Activated CD8-positive, alpha-beta T cell treated with anti-CD3 and anti-CD28 coated beads for 36 hours (primary cell): ENCODE measurements at regions of chr1 and their contacts with region 1.

Region 1: DNA sequence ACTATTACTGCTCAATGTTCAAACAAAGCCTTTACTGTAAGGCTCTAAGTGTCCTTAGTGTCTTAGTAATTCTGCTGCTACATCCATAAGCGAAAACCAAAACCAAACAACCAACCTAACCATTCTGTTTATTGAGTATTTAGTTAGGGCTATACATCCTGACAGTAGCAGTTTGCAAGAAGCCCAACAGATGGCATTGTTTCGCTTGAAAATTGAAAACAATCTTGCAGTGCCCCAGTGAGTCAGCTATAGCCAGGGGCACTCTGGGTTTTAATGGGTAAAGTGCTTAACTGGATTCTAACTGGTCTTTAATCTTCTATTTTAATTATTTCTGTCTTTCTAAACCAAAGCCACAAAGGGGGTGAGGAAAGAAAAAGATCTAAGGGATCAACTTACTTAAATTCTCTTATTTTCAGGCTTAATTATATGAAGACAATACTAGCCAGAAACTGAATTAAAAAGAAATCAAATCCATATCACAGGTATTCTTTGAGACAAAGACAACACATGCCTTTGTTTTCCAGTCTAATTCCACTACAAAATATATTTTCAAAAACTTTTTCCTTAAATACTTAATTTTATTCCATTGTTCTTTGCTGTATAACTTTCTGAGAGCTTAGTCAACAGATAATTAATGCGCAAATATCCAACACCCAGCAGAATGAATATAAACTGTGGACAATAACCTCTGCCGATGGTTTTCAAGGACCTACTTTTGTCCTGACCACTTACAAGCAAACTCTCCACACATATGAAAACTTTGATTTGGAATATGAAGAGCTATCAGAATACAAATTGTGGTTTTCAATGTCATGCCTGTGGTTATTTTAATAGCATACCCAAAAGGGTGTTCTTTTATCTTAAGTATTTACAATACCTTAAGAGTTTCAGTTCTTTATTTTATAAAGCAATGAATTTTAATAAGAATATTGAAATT is 15.2 kb downstream of the POGZ start:
- DNase-seq: peak; percentile 86
- ATAC-seq: peak; percentile 96
- H3K4me3 Mint-ChIP-seq: no peak overlapping the region
- H3K27ac Mint-ChIP-seq: no peak overlapping the region
- H3K4me1 Mint-ChIP-seq: peaks cover 48% of the 10 kb centered on the region
- H3K27me3 Mint-ChIP-seq: no peaks in the 10 kb centered on the region
- CTCF ChIP-seq: peak; percentile 80

Region 2: DNA sequence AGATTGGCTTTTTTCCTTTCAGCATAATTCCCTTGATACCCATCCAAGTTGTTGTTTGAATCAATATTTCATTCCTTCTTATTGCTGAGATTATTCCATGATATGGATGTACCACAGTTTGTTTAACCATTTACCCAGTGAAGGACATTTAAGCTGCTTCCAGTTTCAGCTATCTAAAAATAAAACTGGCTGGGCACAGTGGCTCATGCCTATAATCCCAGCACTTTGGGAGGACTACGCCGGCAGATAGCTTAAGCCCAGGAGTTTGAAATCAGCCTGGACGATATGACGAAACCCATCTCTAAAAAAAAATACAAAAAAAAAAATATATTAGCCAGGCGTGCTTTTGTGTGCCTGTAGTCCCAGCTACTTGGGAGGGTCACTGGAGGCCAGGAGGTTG is 330.2 kb before region 1 on chr1:
- CTCF ChIA-PET with region 1: no interaction called
- POLR2A ChIA-PET with region 1: no interaction called
- intact Hi-C with region 1: no loop called
- DNase-seq: no peak
- ATAC-seq: no peak
- H3K4me3 Mint-ChIP-seq: no peak overlapping the region
- H3K27ac Mint-ChIP-seq: no peak overlapping the region
- H3K4me1 Mint-ChIP-seq: no peaks in the 10 kb centered on the region
- H3K27me3 Mint-ChIP-seq: no peaks in the 10 kb centered on the region
- CTCF ChIP-seq: no peak

Region 3: DNA sequence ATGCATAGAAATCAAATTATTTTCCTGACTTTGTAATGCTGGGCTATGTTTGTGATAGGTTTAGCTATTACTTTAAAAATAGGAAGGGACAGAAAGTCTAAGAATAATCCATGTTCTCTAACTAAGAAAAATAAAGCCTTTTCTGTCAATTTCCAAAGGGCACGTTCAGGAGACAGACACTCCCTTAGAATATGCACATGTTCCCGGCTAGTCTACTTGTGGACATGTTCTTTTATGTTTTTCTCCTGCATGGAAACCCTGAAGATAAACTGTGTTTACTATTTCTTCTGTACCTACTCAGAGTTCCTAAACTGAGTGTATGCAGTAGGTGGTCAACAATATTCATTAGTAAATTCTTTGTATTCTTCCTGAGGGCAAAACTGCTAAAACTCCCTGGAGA is 32.2 kb before region 1 on chr1:
- CTCF ChIA-PET with region 1: no interaction called
- POLR2A ChIA-PET with region 1: no interaction called
- intact Hi-C with region 1: no loop called
- DNase-seq: no peak
- ATAC-seq: no peak
- H3K4me3 Mint-ChIP-seq: no peak overlapping the region
- H3K27ac Mint-ChIP-seq: no peak overlapping the region
- H3K4me1 Mint-ChIP-seq: no peaks in the 10 kb centered on the region
- H3K27me3 Mint-ChIP-seq: no peaks in the 10 kb centered on the region
- CTCF ChIP-seq: no peak

Region 4: DNA sequence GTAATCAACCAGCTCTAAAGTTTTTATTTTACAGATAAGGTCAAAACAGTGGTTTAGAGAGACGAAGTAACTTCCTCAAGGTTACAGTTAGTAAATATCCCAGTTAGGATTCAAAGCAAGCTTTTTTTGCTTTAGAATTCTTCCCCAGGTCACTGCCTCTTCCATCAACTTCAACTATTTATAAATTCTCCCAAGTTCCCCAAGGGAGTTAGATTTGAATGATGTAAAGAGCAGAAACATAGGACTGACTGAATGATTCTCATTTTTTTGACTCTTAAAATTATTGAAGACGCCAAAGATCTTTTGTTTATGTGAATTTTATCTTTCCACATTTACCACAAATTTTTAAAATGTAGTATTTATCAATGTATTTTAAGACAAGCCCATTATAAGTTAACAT is 11.1 kb after region 1 on chr1:
- CTCF ChIA-PET with region 1: interaction called, 20 read pairs
- POLR2A ChIA-PET with region 1: interaction called, 3 read pairs
- intact Hi-C with region 1: no loop called
- DNase-seq: no peak
- ATAC-seq: no peak
- H3K4me3 Mint-ChIP-seq: no peak overlapping the region
- H3K27ac Mint-ChIP-seq: no peak overlapping the region
- H3K4me1 Mint-ChIP-seq: peaks cover 34% of the 10 kb centered on the region
- H3K27me3 Mint-ChIP-seq: no peaks in the 10 kb centered on the region
- CTCF ChIP-seq: no peak

Region 5: GRCh38 chr1:151510957-151511635 is 67.0 kb after region 1 on chr1 and contains the start of gene CGN:
- CTCF ChIA-PET with region 1: interaction called, 5 read pairs
- POLR2A ChIA-PET with region 1: no interaction called
- intact Hi-C with region 1: loop called (anchors 10 kb)
- DNase-seq: peak; percentile 86
- ATAC-seq: peak; percentile 99
- H3K4me3 Mint-ChIP-seq: peak within 1 kb of the TSS; percentile 80
- H3K27ac Mint-ChIP-seq: peak within 1 kb of the TSS; percentile 69
- H3K4me1 Mint-ChIP-seq: peaks cover 27% of the 10 kb centered on the region
- H3K27me3 Mint-ChIP-seq: no peaks in the 10 kb centered on the region
- CTCF ChIP-seq: no peak
- total RNA-seq, gene CGN: 1.7 to 1.9 TPM

Region 6: GRCh38 chr1:151539990-151540981 is 96.2 kb after region 1 on chr1 and contains the start of gene TUFT1:
- CTCF ChIA-PET with region 1: interaction called, 6 read pairs
- POLR2A ChIA-PET with region 1: no interaction called
- intact Hi-C with region 1: loop called (anchors 10 kb)
- DNase-seq: peak; percentile 97
- ATAC-seq: peak; percentile 100
- H3K4me3 Mint-ChIP-seq: peak within 1 kb of the TSS; percentile 73
- H3K27ac Mint-ChIP-seq: no peak within 1 kb of the TSS
- H3K4me1 Mint-ChIP-seq: peaks cover 15% of the 10 kb centered on the region
- H3K27me3 Mint-ChIP-seq: peaks cover 8% of the 10 kb centered on the region
- CTCF ChIP-seq: no peak
- total RNA-seq, gene TUFT1: 1.0 to 1.5 TPM

Region 7: GRCh38 chr1:151739590-151740375 is 295.7 kb after region 1 on chr1:
- CTCF ChIA-PET with region 1: interaction called, 4 read pairs
- POLR2A ChIA-PET with region 1: no interaction called
- intact Hi-C with region 1: loop called (anchors 10 kb)
- DNase-seq: no peak
- ATAC-seq: no peak
- H3K4me3 Mint-ChIP-seq: no peak overlapping the region
- H3K27ac Mint-ChIP-seq: no peak overlapping the region
- H3K4me1 Mint-ChIP-seq: peaks cover 4% of the 10 kb centered on the region
- H3K27me3 Mint-ChIP-seq: peaks cover 2% of the 10 kb centered on the region
- CTCF ChIP-seq: no peak